Ovary (tissue), 10 donors: ENCODE measurements at regions of chr17 and their contacts with region 1.

Region 1: GRCh38 chr17:67475236-67475937 is 98.3 kb downstream of the PITPNC1 start:
- DNase-seq: peak; percentile 37 to 77 (median 62)
- H3K4me3 ChIP-seq: no peak overlapping the region
- H3K27ac ChIP-seq: no peak overlapping the region
- H3K4me1 ChIP-seq: peaks cover 7% of the 10 kb centered on the region
- H3K27me3 ChIP-seq: no peaks in the 10 kb centered on the region
- CTCF ChIP-seq: peak; percentile 27 to 40 (median 30)
- EP300 ChIP-seq: no peak
- POLR2A ChIP-seq: no peak

Region 2: GRCh38 chr17:67386965-67387551 is 88.3 kb before region 1 on chr17:
- intact Hi-C with region 1: loop called in 1 of 4 experiments (anchors 10 kb)
- DNase-seq: peak in 4 of 5 donors; percentile 31 to 67 (median 52)
- H3K4me3 ChIP-seq: no peak overlapping the region
- H3K27ac ChIP-seq: no peak overlapping the region
- H3K4me1 ChIP-seq: peaks cover 3% of the 10 kb centered on the region
- H3K27me3 ChIP-seq: no peaks in the 10 kb centered on the region
- CTCF ChIP-seq: peak in 2 of 3 donors; percentile 28 to 34
- EP300 ChIP-seq: no peak
- POLR2A ChIP-seq: no peak